ENCODE measurements at regions of chr6 and their contacts with region 1.

Region 1: GRCh38 chr6:53718597-53719460 is 53.3 kb upstream of the KLHL31 start:
- DNase-seq: peak; percentile 51
- H3K4me3 Mint-ChIP-seq: no peak overlapping the region
- H3K27ac Mint-ChIP-seq: peak overlapping the region; percentile 70
- H3K4me1 Mint-ChIP-seq: peaks cover 64% of the 10 kb centered on the region
- H3K27me3 Mint-ChIP-seq: no peaks in the 10 kb centered on the region
- CTCF ChIP-seq: peak; percentile 55

Region 2: GRCh38 chr6:53326372-53327016 is 392.3 kb before region 1 on chr6:
- CTCF ChIA-PET with region 1: no interaction called
- intact Hi-C with region 1: no loop called
- DNase-seq: peak; percentile 41
- H3K4me3 Mint-ChIP-seq: peak overlapping the region; percentile 13
- H3K27ac Mint-ChIP-seq: no peak overlapping the region
- H3K4me1 Mint-ChIP-seq: peaks cover 32% of the 10 kb centered on the region
- H3K27me3 Mint-ChIP-seq: no peaks in the 10 kb centered on the region
- CTCF ChIP-seq: no peak

Region 3: GRCh38 chr6:53437557-53438202 is 281.1 kb before region 1 on chr6:
- CTCF ChIA-PET with region 1: no interaction called
- intact Hi-C with region 1: no loop called
- DNase-seq: peak; percentile 50
- H3K4me3 Mint-ChIP-seq: no peak overlapping the region
- H3K27ac Mint-ChIP-seq: no peak overlapping the region
- H3K4me1 Mint-ChIP-seq: peaks cover 8% of the 10 kb centered on the region
- H3K27me3 Mint-ChIP-seq: no peaks in the 10 kb centered on the region
- CTCF ChIP-seq: peak; percentile 52

Region 4: DNA sequence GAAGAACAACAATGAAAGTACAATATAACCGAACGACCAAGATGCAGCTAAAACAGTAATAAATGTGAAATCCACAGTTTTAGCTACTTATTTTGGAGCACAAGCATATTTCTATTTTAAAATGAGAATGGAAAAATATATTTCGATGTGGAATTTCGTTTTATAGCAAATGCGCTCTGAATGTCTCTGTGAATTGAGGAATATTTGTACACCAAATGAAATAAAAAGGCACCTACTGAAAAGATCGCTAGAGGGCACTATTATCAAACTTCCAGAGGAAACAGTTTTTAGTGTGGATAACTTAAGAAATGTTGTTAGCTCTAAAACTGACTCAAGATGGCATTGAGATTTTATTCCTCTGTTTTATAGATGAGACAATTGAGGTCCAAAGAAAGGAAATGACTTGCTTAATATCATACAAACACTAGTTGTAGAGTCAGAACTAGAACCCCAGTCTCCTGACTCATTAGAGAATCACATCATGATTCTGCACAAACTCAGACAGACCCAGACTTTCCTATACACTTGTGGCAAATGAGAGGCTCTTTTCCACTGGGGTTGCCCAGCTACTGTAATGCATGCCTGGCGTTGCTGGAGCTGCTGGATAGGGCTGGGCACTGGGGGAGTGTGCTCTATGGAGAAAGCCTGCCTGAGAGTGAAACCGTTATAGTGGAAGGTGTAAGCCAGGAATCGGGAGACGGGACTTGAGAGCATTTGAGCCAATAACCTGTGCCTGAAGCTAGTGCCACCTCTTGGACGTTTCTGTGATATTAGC is 225.8 kb before region 1 on chr6:
- CTCF ChIA-PET with region 1: interaction called, 11 read pairs
- intact Hi-C with region 1: loop called (anchors 2 kb)
- DNase-seq: no peak
- H3K4me3 Mint-ChIP-seq: peak overlapping the region; percentile 30
- H3K27ac Mint-ChIP-seq: no peak overlapping the region
- H3K4me1 Mint-ChIP-seq: peaks cover 19% of the 10 kb centered on the region
- H3K27me3 Mint-ChIP-seq: no peaks in the 10 kb centered on the region
- CTCF ChIP-seq: peak; percentile 22

Region 5: GRCh38 chr6:53544470-53545308 is 174.1 kb before region 1 on chr6 and contains the start of gene GCLC:
- CTCF ChIA-PET with region 1: interaction called, 5 read pairs
- intact Hi-C with region 1: loop called (anchors 5 kb)
- DNase-seq: peak; percentile 94
- H3K4me3 Mint-ChIP-seq: peak within 1 kb of the TSS; percentile 90
- H3K27ac Mint-ChIP-seq: peak within 1 kb of the TSS; percentile 93
- H3K4me1 Mint-ChIP-seq: peaks cover 12% of the 10 kb centered on the region
- H3K27me3 Mint-ChIP-seq: no peaks in the 10 kb centered on the region
- CTCF ChIP-seq: peak; percentile 77
- total RNA-seq, gene GCLC: 45.7 and 45.9 TPM in 2 replicates

Region 6: GRCh38 chr6:53658992-53659391 is 59.8 kb before region 1 on chr6:
- CTCF ChIA-PET with region 1: no interaction called
- intact Hi-C with region 1: loop called (anchors 5 kb)
- DNase-seq: no peak
- H3K4me3 Mint-ChIP-seq: no peak overlapping the region
- H3K27ac Mint-ChIP-seq: peak overlapping the region; percentile 40
- H3K4me1 Mint-ChIP-seq: peaks cover 16% of the 10 kb centered on the region
- H3K27me3 Mint-ChIP-seq: no peaks in the 10 kb centered on the region
- CTCF ChIP-seq: no peak

Region 7: GRCh38 chr6:53956068-53956711 is 237.4 kb after region 1 on chr6:
- CTCF ChIA-PET with region 1: interaction called, 24 read pairs
- intact Hi-C with region 1: loop called (anchors 5 kb)
- DNase-seq: peak; percentile 86
- H3K4me3 Mint-ChIP-seq: no peak overlapping the region
- H3K27ac Mint-ChIP-seq: no peak overlapping the region
- H3K4me1 Mint-ChIP-seq: peaks cover 14% of the 10 kb centered on the region
- H3K27me3 Mint-ChIP-seq: no peaks in the 10 kb centered on the region
- CTCF ChIP-seq: peak; percentile 89

Measured in Calu3 (cell line).